ENCODE measurements at regions of chr15 and their contacts with region 1.

Region 1: GRCh38 chr15:92881802-92882696 is 18.1 kb upstream of the CHD2 start:
- DNase-seq: peak; percentile 100
- H3K4me3 ChIP-seq: peak overlapping the region; percentile 55
- H3K27ac ChIP-seq: peak overlapping the region; percentile 71
- H3K27me3 ChIP-seq: no peaks in the 10 kb centered on the region
- CTCF ChIP-seq: no peak

Region 2: DNA sequence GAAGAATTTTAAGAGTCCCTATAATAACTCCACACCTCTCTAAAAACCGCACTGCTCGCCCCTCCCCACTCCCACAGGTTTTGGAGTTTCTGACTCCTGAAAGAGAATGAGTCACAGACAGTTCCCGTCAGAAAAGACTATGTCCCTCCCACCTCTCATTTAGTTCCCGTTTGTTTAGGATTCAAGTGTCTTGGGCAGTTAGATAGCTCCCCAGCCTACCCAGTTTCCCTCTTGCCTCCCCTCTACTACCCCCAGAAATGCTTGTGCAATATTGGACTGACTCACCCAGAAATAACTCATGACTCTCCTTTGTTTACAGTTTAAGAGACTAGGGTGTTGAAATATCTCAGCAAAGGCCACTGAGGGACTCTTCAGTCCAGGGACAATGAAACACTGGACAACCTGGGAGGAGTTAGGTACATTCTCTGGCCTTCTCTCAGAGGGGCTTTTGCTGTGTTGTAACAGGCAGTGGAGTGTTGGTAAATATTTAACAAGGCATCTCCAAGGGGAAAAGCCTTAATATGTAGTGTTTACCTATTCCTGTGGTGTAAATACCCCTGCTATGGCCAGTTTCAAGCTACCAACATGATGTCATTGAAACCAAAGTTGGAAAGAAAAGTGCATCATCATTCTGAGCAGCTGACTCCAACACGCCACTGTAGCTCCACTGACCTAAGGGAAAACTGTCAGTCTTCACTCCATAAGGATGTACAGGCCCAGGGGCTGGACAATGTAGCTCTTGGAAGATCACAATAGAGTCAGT is 78.0 kb before region 1 on chr15:
- CTCF ChIA-PET with region 1: interaction called, 6 read pairs
- POLR2A ChIA-PET with region 1: interaction called, 121 read pairs
- DNase-seq: peak; percentile 100
- H3K4me3 ChIP-seq: no peak overlapping the region
- H3K27ac ChIP-seq: peak overlapping the region; percentile 99
- H3K27me3 ChIP-seq: no peaks in the 10 kb centered on the region
- CTCF ChIP-seq: no peak

Region 3: DNA sequence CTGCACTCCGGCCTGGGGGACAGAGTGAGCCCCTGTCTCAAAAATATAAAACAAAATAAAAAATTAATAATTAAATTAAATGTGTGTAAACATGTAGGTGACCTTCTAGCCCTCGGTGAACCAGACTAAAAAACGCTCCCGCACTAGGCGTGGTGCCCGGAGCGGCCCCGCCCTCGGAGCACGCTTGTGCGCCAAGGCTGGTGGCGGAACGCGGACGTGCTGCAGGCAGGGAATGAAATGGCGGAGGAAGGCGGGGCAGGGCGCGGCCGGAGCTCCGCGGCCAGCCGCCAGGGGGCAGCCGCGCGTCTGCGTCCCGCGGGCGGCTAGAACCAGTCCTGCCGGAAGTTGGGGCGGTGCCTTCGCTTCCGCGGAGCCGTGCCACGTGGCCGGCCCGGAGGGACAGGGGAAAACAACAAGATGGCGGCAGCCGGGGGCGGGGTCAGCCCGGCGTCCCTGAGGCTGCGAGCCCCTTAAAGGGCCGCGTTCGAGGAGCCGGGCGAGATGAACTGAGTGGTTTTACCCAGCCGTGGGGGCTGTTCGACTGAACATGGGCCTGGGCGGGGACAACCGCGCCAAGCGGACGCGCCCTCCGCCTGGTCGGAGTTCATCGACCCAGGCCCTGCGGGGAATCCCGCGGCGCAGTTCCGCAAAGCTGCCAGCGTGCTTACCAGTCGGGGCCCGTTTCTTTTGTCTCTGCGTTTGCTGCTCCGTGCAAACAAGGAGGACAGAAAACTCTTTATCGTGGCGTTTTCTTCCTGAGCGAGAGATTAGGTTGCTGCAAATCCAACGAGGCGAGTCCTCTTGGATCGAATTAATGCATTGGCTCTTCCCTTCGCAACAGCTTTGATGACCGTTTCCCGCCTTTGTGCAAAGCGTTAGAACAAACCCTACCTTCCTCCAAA is 72.8 kb before region 1 on chr15:
- CTCF ChIA-PET with region 1: interaction called, 6 read pairs
- POLR2A ChIA-PET with region 1: interaction called, 121 read pairs
- DNase-seq: peak; percentile 94
- H3K4me3 ChIP-seq: peak overlapping the region; percentile 61
- H3K27ac ChIP-seq: peak overlapping the region; percentile 99
- H3K27me3 ChIP-seq: no peaks in the 10 kb centered on the region
- CTCF ChIP-seq: peak; percentile 73

Region 4: DNA sequence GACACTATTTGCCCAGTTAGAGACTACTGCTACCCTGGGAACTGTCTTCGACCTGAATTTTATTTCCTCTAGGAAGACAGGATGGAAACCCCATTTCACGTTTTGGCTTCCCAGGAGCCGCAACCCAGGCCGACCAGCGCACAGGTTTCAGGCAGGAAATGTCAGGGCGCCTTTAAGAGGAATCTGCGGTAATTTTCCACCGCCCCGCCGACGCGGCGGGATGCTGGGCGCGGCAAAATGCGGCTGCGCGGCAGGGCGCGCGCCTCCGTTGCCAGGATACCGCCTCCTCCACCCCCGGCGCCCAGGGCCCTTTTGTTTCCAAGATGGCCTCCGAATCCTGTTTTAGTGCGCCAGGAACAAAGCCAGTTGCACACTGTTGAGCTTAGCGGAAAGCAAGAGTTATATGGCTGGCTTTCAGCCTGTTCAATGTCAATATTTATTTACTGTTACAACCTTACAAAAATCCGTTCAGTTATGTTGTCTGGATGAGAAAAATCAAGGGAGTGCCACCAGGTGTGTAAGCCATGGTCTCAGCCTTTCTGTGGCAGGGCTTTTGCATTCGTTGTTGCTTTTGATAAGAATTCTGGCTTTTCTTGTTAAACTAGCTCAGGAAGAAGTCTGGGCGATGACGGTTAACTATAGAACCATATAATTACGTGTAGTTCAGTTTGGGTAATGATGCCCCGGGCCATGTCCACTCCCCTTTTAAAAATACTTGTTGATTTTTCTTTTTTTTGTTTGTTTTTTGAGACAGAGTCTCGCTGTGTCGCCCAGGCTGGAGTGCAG is 61.6 kb before region 1 on chr15:
- CTCF ChIA-PET with region 1: no interaction called
- POLR2A ChIA-PET with region 1: interaction called, 22 read pairs
- DNase-seq: peak; percentile 58
- H3K4me3 ChIP-seq: peak overlapping the region; percentile 49
- H3K27ac ChIP-seq: peak overlapping the region; percentile 66
- H3K27me3 ChIP-seq: no peaks in the 10 kb centered on the region
- CTCF ChIP-seq: no peak

Region 5: GRCh38 chr15:92831655-92832328 is 50.3 kb before region 1 on chr15:
- CTCF ChIA-PET with region 1: interaction called, 4 read pairs
- POLR2A ChIA-PET with region 1: interaction called, 63 read pairs
- DNase-seq: peak; percentile 89
- H3K4me3 ChIP-seq: peak overlapping the region; percentile 8; the same call in 1 of the 2 replicates
- H3K27ac ChIP-seq: peak overlapping the region; percentile 83
- H3K27me3 ChIP-seq: no peaks in the 10 kb centered on the region
- CTCF ChIP-seq: 0 out of 2 replicates have a peak, but pooled peaks have one; percentile 10

Region 6: DNA sequence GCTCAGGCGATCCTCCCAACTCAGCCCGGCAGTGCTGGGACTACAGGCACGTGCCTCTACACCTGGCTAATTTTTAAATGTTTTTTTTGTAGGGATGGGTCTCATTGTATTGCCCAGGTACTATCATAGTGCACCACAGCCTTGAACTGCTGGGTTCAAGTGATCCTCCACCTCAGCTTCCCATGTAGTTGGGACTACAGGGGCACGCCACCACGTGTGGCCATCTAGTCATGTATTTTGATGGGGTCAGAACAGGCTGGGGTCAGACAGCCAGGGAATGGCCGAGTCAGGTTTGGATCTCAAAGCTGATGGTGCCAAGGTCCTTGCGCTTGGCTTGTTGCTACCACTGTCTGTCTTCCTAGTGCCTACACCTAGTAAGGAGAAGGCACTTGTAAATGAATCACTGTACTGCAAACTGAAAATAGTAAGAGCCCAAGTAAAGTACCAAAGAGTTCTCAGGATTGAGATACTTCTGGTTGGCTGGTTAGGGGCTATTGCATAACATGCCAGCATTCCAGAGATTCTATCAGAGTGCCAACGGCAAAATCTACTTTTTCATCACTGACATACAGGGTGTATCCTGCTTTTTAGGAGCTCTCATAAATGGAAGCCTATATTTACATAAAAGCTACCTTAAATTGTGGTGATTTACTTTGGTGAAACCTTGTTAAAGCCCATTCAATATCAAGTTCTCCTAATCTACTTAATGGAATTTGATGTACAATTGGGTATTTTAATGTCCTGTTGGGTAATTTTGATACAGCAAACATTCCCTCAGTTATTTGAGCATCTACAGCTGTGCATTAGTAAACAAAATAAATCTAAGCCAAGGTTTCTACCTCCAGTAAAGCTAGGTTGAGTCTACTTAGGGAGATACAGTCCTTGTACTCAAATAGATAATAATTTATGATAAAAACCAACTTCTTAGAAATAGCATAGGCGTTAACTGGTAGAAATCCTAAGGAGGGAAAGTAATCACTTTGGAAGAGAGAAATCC is 12.8 kb before region 1 on chr15:
- CTCF ChIA-PET with region 1: interaction called, 6 read pairs
- POLR2A ChIA-PET with region 1: interaction called, 25 read pairs
- DNase-seq: no peak
- H3K4me3 ChIP-seq: no peak overlapping the region
- H3K27ac ChIP-seq: peak overlapping the region; percentile 31
- H3K27me3 ChIP-seq: no peaks in the 10 kb centered on the region
- CTCF ChIP-seq: no peak

Region 7: GRCh38 chr15:92903941-92904831 is 22.1 kb after region 1 on chr15:
- CTCF ChIA-PET with region 1: interaction called, 3 read pairs
- POLR2A ChIA-PET with region 1: interaction called, 98 read pairs
- DNase-seq: peak; percentile 97
- H3K4me3 ChIP-seq: peak overlapping the region; percentile 74
- H3K27ac ChIP-seq: peak overlapping the region; percentile 97
- H3K27me3 ChIP-seq: no peaks in the 10 kb centered on the region
- CTCF ChIP-seq: no peak

Region 8: DNA sequence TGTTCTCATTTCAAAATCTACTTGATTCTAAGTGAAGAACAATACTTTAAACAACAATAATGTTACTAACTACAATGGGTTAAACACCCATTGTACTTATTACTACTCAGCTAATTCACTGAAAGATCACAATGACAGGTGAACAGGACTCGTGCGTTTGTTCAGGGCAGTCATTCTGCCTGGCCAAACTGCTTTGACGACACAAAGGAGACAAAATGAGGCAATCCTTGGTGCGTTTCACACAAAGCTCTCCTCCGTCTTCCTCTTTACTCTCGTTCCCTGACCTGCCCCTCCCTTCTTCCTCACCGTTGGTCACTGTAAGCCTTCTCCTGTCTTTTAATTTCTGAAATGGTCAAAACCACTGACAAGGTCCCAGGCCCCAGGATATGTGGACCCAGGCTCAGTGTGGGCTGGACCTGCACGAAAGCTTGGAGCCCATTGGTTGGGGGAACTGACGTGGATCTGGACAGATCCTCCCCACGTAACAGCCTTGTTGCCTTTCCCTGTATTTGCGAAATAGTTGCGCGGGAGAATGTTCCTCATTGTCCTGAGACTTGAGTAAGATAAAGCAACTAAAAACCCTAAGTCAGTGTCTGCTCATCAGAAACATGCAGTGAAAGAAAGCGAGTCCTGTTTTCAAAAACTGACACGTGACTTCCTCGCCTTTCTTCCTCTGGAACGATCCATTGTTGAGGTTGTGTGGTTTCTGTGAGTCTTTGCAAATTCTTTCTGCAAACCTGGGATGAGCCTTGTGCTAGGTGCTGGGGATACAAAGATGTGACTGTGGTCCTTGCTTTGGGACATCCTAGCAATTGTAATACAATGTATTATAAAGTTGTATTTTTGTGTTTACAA is 354.1 kb after region 1 on chr15:
- CTCF ChIA-PET with region 1: no interaction called
- POLR2A ChIA-PET with region 1: no interaction called
- DNase-seq: no peak
- H3K4me3 ChIP-seq: no peak overlapping the region
- H3K27ac ChIP-seq: no peak overlapping the region
- H3K27me3 ChIP-seq: no peaks in the 10 kb centered on the region
- CTCF ChIP-seq: no peak